SK-N-SH (cell line): ENCODE measurements at regions of chr10 and their contacts with region 1.

Region 1: GRCh38 chr10:60434418-60435046 is 44.9 kb upstream of the ANK3 start:
- DNase-seq: peak; percentile 61
- H3K4me3 ChIP-seq: no peak overlapping the region; a peak in 1 of 4 replicates
- H3K27ac ChIP-seq: peak overlapping the region; percentile 65 to 98; a peak in 3 of 4 replicates
- H3K4me1 ChIP-seq: peaks cover 7 to 39% of the 10 kb centered on the region in 2 experiments
- H3K27me3 ChIP-seq: no peaks in the 10 kb centered on the region
- CTCF ChIP-seq: peak; percentile 84
- EP300 ChIP-seq: no peak
- RAD21 ChIP-seq: peak; percentile 98

Region 2: GRCh38 chr10:60099998-60100747 is 334.4 kb before region 1 on chr10:
- CTCF ChIA-PET with region 1: interaction called, 22 read pairs
- POLR2A ChIA-PET with region 1: no interaction called
- DNase-seq: peak; percentile 37
- H3K4me3 ChIP-seq: no peak overlapping the region; a peak in 1 of 4 replicates
- H3K27ac ChIP-seq: no peak overlapping the region
- H3K4me1 ChIP-seq: no peaks in the 10 kb centered on the region; a peak in 2 of 4 replicates
- H3K27me3 ChIP-seq: no peaks in the 10 kb centered on the region
- CTCF ChIP-seq: peak; percentile 71
- EP300 ChIP-seq: no peak
- RAD21 ChIP-seq: peak; percentile 85

Region 3: GRCh38 chr10:60114765-60115586 is 319.6 kb before region 1 on chr10:
- CTCF ChIA-PET with region 1: interaction called, 15 read pairs
- POLR2A ChIA-PET with region 1: no interaction called
- DNase-seq: peak; percentile 14
- H3K4me3 ChIP-seq: no peak overlapping the region; a peak in 1 of 4 replicates
- H3K27ac ChIP-seq: peak overlapping the region; percentile 28 to 51; a peak in 2 of 4 replicates
- H3K4me1 ChIP-seq: peaks cover 0 to 6% of the 10 kb centered on the region in 2 experiments; a peak in 1 of 4 replicates
- H3K27me3 ChIP-seq: no peaks in the 10 kb centered on the region
- CTCF ChIP-seq: peak; percentile 75
- EP300 ChIP-seq: no peak
- RAD21 ChIP-seq: peak; percentile 71

Region 4: GRCh38 chr10:60224066-60224705 is 210.3 kb before region 1 on chr10:
- CTCF ChIA-PET with region 1: interaction called, 14 read pairs
- POLR2A ChIA-PET with region 1: no interaction called
- DNase-seq: peak; percentile 56
- H3K4me3 ChIP-seq: peak overlapping the region in 1 of 2 experiments; percentile 14; a peak in 1 of 4 replicates
- H3K27ac ChIP-seq: peak overlapping the region; percentile 47 to 92; a peak in 3 of 4 replicates
- H3K4me1 ChIP-seq: peaks cover 0 to 15% of the 10 kb centered on the region in 2 experiments; a peak in 2 of 4 replicates
- H3K27me3 ChIP-seq: no peaks in the 10 kb centered on the region
- CTCF ChIP-seq: no peak
- EP300 ChIP-seq: peak in 1 of 2 experiments; percentile 90; a peak in 2 of 4 replicates
- RAD21 ChIP-seq: peak; percentile 27

Region 5: GRCh38 chr10:60456053-60456452 is 21.5 kb after region 1 on chr10:
- CTCF ChIA-PET with region 1: no interaction called
- POLR2A ChIA-PET with region 1: no interaction called
- DNase-seq: no peak
- H3K4me3 ChIP-seq: no peak overlapping the region
- H3K27ac ChIP-seq: no peak overlapping the region
- H3K4me1 ChIP-seq: no peaks in the 10 kb centered on the region; a peak in 1 of 4 replicates
- H3K27me3 ChIP-seq: no peaks in the 10 kb centered on the region
- CTCF ChIP-seq: peak; percentile 57
- EP300 ChIP-seq: no peak
- RAD21 ChIP-seq: no peak

Region 6: GRCh38 chr10:60646966-60647796 is 212.6 kb after region 1 on chr10:
- CTCF ChIA-PET with region 1: interaction called, 294 read pairs
- POLR2A ChIA-PET with region 1: no interaction called
- DNase-seq: peak; percentile 12
- H3K4me3 ChIP-seq: no peak overlapping the region
- H3K27ac ChIP-seq: no peak overlapping the region
- H3K4me1 ChIP-seq: peaks cover 7 to 19% of the 10 kb centered on the region in 2 experiments
- H3K27me3 ChIP-seq: no peaks in the 10 kb centered on the region
- CTCF ChIP-seq: peak; percentile 84
- EP300 ChIP-seq: no peak
- RAD21 ChIP-seq: peak; percentile 94